ENCODE measurements at regions of chr2 and their contacts with region 1.

Region 1: DNA sequence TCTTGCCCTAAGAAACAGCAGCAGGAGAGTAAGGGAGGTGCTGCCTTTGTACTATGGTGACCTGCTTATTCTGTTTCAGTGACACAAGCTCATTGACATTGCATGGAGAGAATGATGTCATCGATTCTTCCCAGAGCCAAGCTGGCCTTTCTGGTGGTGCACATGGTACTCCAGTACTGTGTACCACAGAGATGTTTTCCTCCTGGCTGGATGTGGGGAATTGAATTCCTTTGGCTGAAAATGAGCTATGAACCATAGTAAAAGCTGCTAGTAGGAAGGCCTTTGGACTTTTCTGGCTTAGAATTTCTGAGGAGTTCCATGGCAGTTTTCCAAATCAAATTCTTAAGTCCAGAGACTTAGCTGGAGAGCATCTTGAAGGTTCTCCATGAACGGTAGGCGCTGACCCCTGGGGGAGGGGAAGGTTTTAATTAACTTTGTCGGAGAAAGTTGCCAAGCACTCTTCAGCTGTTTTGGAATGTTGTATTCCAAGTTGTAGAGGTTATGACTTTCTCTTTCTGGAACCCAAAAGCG is 17.1 kb upstream of the B3GNT2 start:
- DNase-seq: no peak
- ATAC-seq: no peak
- H3K4me3 ChIP-seq: no peak overlapping the region
- H3K4me3 Mint-ChIP-seq: no peak overlapping the region
- H3K27ac ChIP-seq: no peak overlapping the region
- H3K27ac Mint-ChIP-seq: no peak overlapping the region
- H3K4me1 ChIP-seq: no peaks in the 10 kb centered on the region
- H3K4me1 Mint-ChIP-seq: peaks cover 13% of the 10 kb centered on the region
- H3K27me3 ChIP-seq: no peaks in the 10 kb centered on the region
- H3K27me3 Mint-ChIP-seq: no peaks in the 10 kb centered on the region
- CTCF ChIP-seq: no peak

Region 2: GRCh38 chr2:62099523-62100175 is 79.2 kb before region 1 on chr2:
- CTCF ChIA-PET with region 1: no interaction called
- POLR2A ChIA-PET with region 1: no interaction called
- intact Hi-C with region 1: no loop called
- DNase-seq: no peak
- ATAC-seq: no peak
- H3K4me3 ChIP-seq: no peak overlapping the region
- H3K4me3 Mint-ChIP-seq: no peak overlapping the region
- H3K27ac ChIP-seq: no peak overlapping the region
- H3K27ac Mint-ChIP-seq: no peak overlapping the region
- H3K4me1 ChIP-seq: no peaks in the 10 kb centered on the region
- H3K4me1 Mint-ChIP-seq: no peaks in the 10 kb centered on the region
- H3K27me3 ChIP-seq: no peaks in the 10 kb centered on the region
- H3K27me3 Mint-ChIP-seq: no peaks in the 10 kb centered on the region
- CTCF ChIP-seq: no peak

Region 3: GRCh38 chr2:62306751-62307468 is 128.1 kb after region 1 on chr2:
- CTCF ChIA-PET with region 1: no interaction called
- POLR2A ChIA-PET with region 1: no interaction called
- intact Hi-C with region 1: no loop called
- DNase-seq: peak in 5 of 14 experiments; percentile 5 to 73 (median 67)
- ATAC-seq: peak; percentile 18
- H3K4me3 ChIP-seq: no peak overlapping the region
- H3K4me3 Mint-ChIP-seq: no peak overlapping the region
- H3K27ac ChIP-seq: peak overlapping the region in 1 of 2 donors; percentile 65
- H3K27ac Mint-ChIP-seq: peak overlapping the region; percentile 75
- H3K4me1 ChIP-seq: peaks cover 71% of the 10 kb centered on the region
- H3K4me1 Mint-ChIP-seq: peaks cover 88% of the 10 kb centered on the region
- H3K27me3 ChIP-seq: no peaks in the 10 kb centered on the region
- H3K27me3 Mint-ChIP-seq: no peaks in the 10 kb centered on the region
- CTCF ChIP-seq: no peak

Region 4: DNA sequence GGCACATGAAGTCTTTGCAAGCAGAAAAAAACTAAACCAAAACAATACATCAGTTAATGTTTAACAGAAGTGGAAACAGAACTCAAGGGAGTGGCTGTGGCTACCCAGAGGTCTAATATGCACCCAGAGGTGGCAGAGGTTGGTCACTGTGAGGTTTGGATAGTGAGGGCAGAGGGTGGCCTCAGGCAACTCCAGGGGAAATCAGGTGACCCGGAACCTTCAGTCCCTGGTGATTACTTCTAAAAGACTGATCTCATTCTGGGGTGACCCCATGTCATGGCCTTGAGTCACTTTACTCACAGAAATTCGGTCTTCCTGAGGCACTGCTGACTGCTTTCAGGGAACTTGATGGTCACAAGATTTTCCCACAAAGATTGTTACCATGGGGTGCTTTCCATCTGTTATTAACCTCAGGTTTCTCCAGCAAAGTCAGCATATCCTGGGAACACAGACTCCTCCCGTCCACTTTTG is 227.8 kb after region 1 on chr2:
- CTCF ChIA-PET with region 1: no interaction called
- POLR2A ChIA-PET with region 1: no interaction called
- intact Hi-C with region 1: loop called in 1 of 2 experiments (anchors 10 kb)
- DNase-seq: no peak
- ATAC-seq: no peak
- H3K4me3 ChIP-seq: no peak overlapping the region
- H3K4me3 Mint-ChIP-seq: no peak overlapping the region
- H3K27ac ChIP-seq: no peak overlapping the region
- H3K27ac Mint-ChIP-seq: no peak overlapping the region
- H3K4me1 ChIP-seq: peaks cover 1% of the 10 kb centered on the region
- H3K4me1 Mint-ChIP-seq: no peaks in the 10 kb centered on the region
- H3K27me3 ChIP-seq: no peaks in the 10 kb centered on the region
- H3K27me3 Mint-ChIP-seq: no peaks in the 10 kb centered on the region
- CTCF ChIP-seq: no peak

Measured in CD4-positive, alpha-beta T cell (primary cell).